Head of caudate nucleus (tissue), 42 donors: ENCODE measurements at regions of chrX and their contacts with region 1.

Region 1: DNA sequence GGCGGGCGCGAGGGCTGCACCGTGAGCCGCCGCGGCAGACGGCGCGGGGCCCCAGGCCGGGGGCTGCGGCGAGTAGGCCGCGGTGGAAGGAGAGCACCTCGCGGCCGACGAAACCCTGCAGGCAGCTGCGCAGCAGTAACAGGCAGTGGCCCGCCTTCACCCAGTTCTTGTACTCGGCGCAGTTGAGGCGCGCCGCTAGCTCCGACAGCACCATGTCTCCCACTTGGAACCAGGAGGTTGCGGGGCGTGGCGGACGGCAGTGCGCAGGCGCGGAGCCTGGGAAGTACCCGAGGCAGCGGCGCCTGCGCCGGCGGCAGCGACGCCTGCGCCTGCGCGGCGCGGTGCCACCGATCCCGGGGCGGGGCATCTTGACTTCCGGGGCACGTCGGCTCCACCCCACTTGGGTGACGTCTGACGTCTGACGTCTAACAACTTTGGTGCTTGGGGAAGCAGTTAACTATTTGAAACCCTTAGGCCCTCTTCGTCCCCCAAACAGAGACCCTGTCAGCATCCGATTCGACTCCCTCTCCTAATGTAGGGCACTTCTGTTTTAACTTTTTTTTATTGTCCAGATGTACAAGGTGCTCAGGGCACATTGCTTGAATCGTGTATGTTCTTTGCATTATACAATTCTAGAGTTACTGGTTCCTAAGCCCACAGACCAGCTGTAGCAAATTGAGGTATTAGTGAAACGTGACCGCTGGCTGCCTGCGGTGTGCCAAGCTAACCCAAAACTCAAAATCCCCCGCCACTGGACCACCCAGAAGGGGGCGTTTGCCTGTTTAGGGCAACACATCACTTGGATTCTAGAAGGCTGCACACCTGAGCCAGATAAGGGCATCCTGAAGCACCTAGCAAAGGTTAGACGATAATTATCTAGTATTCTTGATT is at the start of gene CXorf38:
- DNase-seq: peak; percentile 72 to 94 (median 90)

Region 2: GRCh38 chrX:40514415-40514814 is 133.1 kb before region 1 on chrX:
- intact Hi-C with region 1: no loop called
- DNase-seq: no peak

Region 3: DNA sequence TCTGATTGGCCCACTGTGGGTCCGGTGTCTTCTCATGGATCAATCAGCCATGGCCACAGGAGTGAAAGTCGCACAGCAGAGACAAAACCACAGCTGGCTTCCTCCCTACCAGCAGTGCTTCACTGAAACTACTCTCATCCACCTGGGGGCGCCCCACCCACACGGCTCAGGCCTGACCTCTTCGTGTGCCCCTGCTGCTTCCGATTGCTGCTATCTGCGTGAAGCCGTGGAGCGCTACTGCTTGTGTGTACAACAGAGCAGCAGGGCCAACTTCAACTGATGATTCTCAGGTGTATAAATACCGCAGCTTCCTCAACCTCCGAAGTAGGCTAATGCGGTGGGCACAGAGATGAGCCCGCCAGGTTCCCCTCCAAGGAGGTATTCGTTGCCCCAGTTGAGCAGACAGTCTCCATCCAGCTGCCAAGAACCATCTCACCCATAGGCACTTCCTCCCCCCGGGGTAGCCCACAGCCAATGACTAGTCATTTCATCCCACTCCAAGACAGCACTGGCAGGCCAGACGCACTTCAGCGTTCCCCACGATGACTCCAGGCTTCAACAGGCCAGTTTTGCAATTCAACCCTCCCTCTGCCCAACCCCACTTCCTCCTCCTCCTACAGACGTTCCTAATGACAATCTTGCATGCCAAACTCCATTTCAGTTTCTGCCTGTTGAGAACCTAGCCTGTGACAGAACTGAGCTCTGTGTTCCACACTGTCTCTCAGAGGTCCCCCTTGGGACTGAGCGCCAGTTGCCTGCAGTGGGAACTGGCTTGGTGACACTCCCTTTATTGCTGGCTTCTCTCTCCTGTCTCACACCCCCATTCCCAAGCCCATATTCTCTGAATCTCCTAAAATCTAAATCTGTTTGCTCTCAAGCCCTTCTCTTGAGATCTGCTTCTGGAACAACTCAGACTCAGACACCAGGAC is 108.1 kb before region 1 on chrX:
- intact Hi-C with region 1: loop called (anchors 5 kb)
- DNase-seq: peak in 20 of 42 donors; percentile 6 to 52 (median 16)

Region 4: GRCh38 chrX:40735325-40736169 is 88.0 kb after region 1 on chrX and contains the start of gene MED14:
- intact Hi-C with region 1: loop called (anchors 2 kb)
- DNase-seq: peak; percentile 71 to 95 (median 90)

Region 5: DNA sequence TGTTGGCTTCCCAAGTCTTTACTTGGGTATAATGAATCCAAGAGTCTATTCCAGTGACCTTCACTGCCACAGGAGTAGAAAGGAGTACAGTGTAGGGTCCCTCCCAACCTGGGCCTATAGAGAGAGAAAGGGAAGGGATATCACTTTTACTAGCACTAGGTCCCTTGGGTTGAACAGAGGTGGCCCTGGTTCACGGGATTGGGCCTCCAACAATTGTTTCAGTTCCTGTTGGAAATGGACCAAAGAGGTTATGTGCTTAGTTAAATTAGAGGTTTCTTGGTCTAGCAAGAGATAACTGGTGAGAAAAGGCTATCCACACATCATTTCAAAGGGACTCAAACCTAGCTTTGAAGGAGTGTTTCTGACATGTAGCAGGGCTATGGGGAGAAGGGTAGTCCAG is 144.9 kb after region 1 on chrX:
- intact Hi-C with region 1: loop called (anchors 5 kb)
- DNase-seq: no peak

Region 6: DNA sequence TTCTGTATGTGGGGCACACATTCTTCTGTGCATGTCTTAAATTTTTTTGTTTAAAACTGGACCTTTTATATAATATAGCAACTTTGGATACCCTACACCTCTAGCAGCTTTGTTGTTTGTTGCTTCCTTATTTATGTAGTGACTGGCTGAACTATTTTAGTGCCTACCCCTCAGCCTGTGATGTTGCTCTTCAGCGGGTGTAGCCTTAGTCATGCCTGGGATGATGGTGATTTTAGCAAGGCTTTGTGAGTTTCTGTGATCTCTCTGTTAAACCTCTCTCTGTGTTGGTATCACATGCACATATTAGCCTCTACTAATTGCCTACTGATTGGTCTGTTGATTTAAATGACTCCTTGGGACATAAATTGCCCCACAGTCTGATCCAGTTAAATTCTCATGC is 460.5 kb after region 1 on chrX:
- intact Hi-C with region 1: loop called (anchors 10 kb)
- DNase-seq: no peak

Region 7: DNA sequence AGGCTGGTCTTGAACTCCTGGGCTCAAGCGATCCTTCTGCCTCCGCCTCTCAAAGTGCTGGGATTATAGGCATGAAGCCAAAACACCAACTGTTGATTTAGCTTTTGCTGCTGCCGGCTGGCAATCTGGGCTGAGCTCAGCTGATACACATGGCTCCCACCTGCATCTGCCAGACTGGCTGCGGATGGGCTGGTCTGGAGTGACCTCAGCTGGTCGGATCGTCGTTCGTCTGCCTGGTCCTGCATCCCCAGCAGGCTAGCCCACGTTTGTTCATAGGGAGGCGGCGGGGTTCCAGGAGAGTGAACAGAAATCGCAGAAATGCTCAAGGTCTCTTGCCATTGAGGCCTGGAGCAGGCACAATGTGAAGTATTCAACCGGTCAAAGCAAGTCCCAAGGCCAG is 612.0 kb after region 1 on chrX:
- intact Hi-C with region 1: loop called (anchors 10 kb)
- DNase-seq: no peak

Region 8: GRCh38 chrX:41333744-41334259 is 686.2 kb after region 1 on chrX and contains the start of gene DDX3X:
- intact Hi-C with region 1: loop called (anchors 10 kb)
- DNase-seq: peak; percentile 75 to 97 (median 93)